WTC11 (cell line): ENCODE measurements at regions of chr17 and their contacts with region 1.

Region 1: GRCh38 chr17:77088455-77089123 is 52.2 kb upstream of the SEC14L1 start:
- DNase-seq: peak; percentile 92
- ATAC-seq: peak; percentile 88
- H3K4me3 Mint-ChIP-seq: peak overlapping the region; percentile 92
- H3K27ac Mint-ChIP-seq: peak overlapping the region; percentile 95
- H3K4me1 Mint-ChIP-seq: peaks cover 26% of the 10 kb centered on the region
- H3K27me3 Mint-ChIP-seq: no peaks in the 10 kb centered on the region
- CTCF ChIP-seq: no peak

Region 2: DNA sequence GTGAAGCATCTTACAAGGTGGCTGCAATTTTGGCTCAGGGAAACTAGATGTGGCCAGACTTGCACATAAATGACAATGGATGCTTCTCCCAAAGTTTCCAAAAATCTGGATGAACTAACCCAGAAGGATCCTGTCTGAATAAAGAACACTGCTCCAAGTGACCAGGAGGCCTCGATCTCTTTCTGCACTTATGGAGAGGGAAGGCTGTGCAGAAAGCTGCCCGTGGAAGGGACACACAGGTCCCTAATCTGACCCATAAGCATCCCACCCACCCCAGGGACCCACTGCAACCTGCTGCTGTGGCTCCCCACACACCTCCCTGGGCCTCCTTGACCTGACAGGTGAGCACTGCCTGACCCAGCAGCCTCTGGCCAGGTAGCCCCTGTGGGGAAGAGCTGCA is 22.4 kb before region 1 on chr17:
- CTCF ChIA-PET with region 1: interaction called, 13 read pairs
- POLR2A ChIA-PET with region 1: no interaction called
- DNase-seq: no peak
- ATAC-seq: no peak
- H3K4me3 Mint-ChIP-seq: no peak overlapping the region
- H3K27ac Mint-ChIP-seq: no peak overlapping the region
- H3K4me1 Mint-ChIP-seq: peaks cover 18% of the 10 kb centered on the region
- H3K27me3 Mint-ChIP-seq: no peaks in the 10 kb centered on the region
- CTCF ChIP-seq: no peak

Region 3: GRCh38 chr17:77107506-77108433 is 19.2 kb after region 1 on chr17:
- CTCF ChIA-PET with region 1: interaction called, 15 read pairs
- POLR2A ChIA-PET with region 1: interaction called, 4 read pairs
- DNase-seq: no peak
- ATAC-seq: no peak
- H3K4me3 Mint-ChIP-seq: no peak overlapping the region
- H3K27ac Mint-ChIP-seq: peak overlapping the region; percentile 45
- H3K4me1 Mint-ChIP-seq: peaks cover 59% of the 10 kb centered on the region
- H3K27me3 Mint-ChIP-seq: no peaks in the 10 kb centered on the region
- CTCF ChIP-seq: no peak

Region 4: GRCh38 chr17:77214743-77215142 is 126.2 kb after region 1 on chr17:
- CTCF ChIA-PET with region 1: interaction called, 13 read pairs
- POLR2A ChIA-PET with region 1: no interaction called
- DNase-seq: peak; percentile 72
- ATAC-seq: peak; percentile 96
- H3K4me3 Mint-ChIP-seq: no peak overlapping the region
- H3K27ac Mint-ChIP-seq: no peak overlapping the region
- H3K4me1 Mint-ChIP-seq: peaks cover 4% of the 10 kb centered on the region
- H3K27me3 Mint-ChIP-seq: no peaks in the 10 kb centered on the region
- CTCF ChIP-seq: no peak

Region 5: DNA sequence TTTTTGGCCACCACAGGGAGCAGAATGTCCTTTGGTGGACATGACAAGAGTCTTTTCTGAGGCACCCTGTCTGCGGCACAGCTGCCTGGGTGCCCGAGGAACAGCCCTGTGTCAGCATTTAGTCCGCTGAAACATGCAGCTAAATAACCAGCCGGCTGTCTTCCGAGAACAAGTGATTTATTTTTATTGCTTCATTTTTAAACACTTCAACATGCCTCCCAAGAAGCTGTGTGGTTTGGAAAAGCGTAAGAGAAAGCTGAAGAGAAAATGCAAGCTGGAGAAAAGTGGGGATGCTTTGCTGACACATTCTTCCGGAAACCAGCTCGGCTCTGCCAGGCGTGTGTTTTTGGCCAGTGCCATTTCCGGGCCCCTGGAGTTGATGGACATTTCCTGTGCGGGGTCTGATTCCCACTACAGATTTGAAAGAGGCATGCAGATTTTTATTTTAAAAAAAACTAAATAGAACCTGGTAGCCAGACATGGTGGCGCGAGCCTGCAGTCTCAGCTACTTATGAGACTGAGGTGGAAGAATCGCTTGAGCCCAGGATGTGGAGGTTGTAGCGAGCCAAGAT is 146.9 kb after region 1 on chr17:
- CTCF ChIA-PET with region 1: no interaction called
- POLR2A ChIA-PET with region 1: no interaction called
- DNase-seq: no peak
- ATAC-seq: no peak
- H3K4me3 Mint-ChIP-seq: no peak overlapping the region
- H3K27ac Mint-ChIP-seq: no peak overlapping the region
- H3K4me1 Mint-ChIP-seq: peaks cover 12% of the 10 kb centered on the region
- H3K27me3 Mint-ChIP-seq: no peaks in the 10 kb centered on the region
- CTCF ChIP-seq: no peak

Region 6: GRCh38 chr17:77254951-77255825 is 166.6 kb after region 1 on chr17:
- CTCF ChIA-PET with region 1: interaction called, 10 read pairs
- POLR2A ChIA-PET with region 1: no interaction called
- DNase-seq: no peak
- ATAC-seq: peak; percentile 47
- H3K4me3 Mint-ChIP-seq: no peak overlapping the region
- H3K27ac Mint-ChIP-seq: no peak overlapping the region
- H3K4me1 Mint-ChIP-seq: peaks cover 16% of the 10 kb centered on the region
- H3K27me3 Mint-ChIP-seq: peaks cover 2% of the 10 kb centered on the region; the same call in 1 of the 2 replicates
- CTCF ChIP-seq: no peak